ENCODE measurements at regions of chr16 and their contacts with region 1.

Region 1: DNA sequence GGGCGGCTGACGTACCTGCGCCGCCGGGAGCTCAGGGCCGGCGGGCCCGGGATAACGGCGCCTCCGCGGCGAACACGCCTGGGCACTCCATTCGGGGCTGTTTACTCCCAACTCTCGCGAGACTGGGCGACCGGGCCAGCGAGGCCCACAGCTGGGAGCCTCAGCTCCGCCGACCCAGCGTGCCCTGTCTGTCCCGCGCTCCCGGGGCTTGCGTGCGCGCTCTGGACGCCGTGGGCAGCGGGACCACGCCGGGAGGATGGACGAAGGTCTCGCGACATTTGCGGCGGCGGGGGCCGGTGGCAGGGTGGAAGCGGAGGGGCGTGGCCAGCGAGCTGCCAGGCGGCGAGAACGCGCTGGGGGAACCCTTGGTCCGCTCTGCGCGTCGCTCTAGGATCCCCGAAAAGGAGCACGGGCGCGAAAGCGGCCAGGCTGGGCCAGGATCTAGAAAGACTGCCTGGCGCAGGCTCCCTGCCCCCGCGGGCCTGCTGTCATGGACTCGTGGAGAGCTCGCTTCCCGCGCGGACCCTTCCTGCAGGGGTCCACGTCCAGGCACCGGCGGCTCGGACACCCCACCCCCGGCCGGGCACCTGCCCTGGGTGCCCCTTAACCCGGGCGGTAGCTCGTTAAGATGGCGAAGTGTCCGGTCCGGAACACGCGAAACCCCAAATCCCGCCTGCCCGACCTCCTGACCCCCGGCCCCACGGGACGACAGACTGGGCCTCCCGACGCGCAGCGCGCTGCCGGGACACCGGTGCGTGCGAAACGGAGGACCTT is at the start of gene MBTPS1:
- DNase-seq: peak; percentile 98
- ATAC-seq: peak; percentile 94
- H3K4me3 ChIP-seq: peak within 1 kb of the TSS; percentile 60 to 81
- H3K27ac ChIP-seq: peak within 1 kb of the TSS; percentile 84
- H3K4me1 ChIP-seq: peaks cover 11 to 22% of the 10 kb centered on the region in 2 experiments
- H3K27me3 ChIP-seq: no peaks in the 10 kb centered on the region
- CTCF ChIP-seq: no peak
- POLR2A ChIP-seq: peak; percentile 73
- RAD21 ChIP-seq: no peak
- total RNA-seq, gene MBTPS1: 111 TPM

Region 2: GRCh38 chr16:84144859-84145639 is 28.1 kb after region 1 on chr16 and contains the starts of genes DNAAF1 and HSDL1:
- CTCF ChIA-PET with region 1: interaction called, 3 read pairs
- POLR2A ChIA-PET with region 1: interaction called, 4 read pairs
- RAD21 ChIA-PET with region 1: no interaction called
- intact Hi-C with region 1: loop called (anchors 2 kb)
- DNase-seq: peak; percentile 71
- ATAC-seq: peak; percentile 83
- H3K4me3 ChIP-seq: peak within 1 kb of the TSS; percentile 66 to 93
- H3K27ac ChIP-seq: peak within 1 kb of the TSS; percentile 46
- H3K4me1 ChIP-seq: peaks cover 8 to 21% of the 10 kb centered on the region in 2 experiments; a peak in 2 of 4 replicates
- H3K27me3 ChIP-seq: no peaks in the 10 kb centered on the region
- CTCF ChIP-seq: peak in 1 of 3 experiments; percentile 22; a peak in 1 of 6 replicates
- POLR2A ChIP-seq: peak; percentile 52
- RAD21 ChIP-seq: no peak
- total RNA-seq, gene DNAAF1: 0.30 TPM
- total RNA-seq, gene HSDL1: 35.8 TPM